ENCODE measurements at regions of chr20 and their contacts with region 1.

Region 1: GRCh38 chr20:53547664-53548239 is 45.9 kb downstream of the ZNF217 start:
- DNase-seq: peak; percentile 63
- ATAC-seq: peak; percentile 55
- H3K4me3 Mint-ChIP-seq: no peak overlapping the region
- H3K27ac Mint-ChIP-seq: no peak overlapping the region
- H3K4me1 Mint-ChIP-seq: peaks cover 2% of the 10 kb centered on the region
- H3K27me3 Mint-ChIP-seq: no peaks in the 10 kb centered on the region

Region 2: GRCh38 chr20:52312132-52312729 is 1235.5 kb before region 1 on chr20:
- CTCF ChIA-PET with region 1: interaction called, 11 read pairs
- POLR2A ChIA-PET with region 1: no interaction called
- intact Hi-C with region 1: loop called (anchors 1 kb)
- DNase-seq: peak; percentile 68
- ATAC-seq: peak; percentile 82
- H3K4me3 Mint-ChIP-seq: no peak overlapping the region
- H3K27ac Mint-ChIP-seq: no peak overlapping the region
- H3K4me1 Mint-ChIP-seq: peaks cover 20% of the 10 kb centered on the region
- H3K27me3 Mint-ChIP-seq: peaks cover 1% of the 10 kb centered on the region

Region 3: GRCh38 chr20:53413186-53413631 is 134.5 kb before region 1 on chr20:
- CTCF ChIA-PET with region 1: interaction called, 4 read pairs
- POLR2A ChIA-PET with region 1: no interaction called
- intact Hi-C with region 1: loop called (anchors 1 to 10 kb)
- DNase-seq: peak; percentile 75
- ATAC-seq: peak; percentile 71
- H3K4me3 Mint-ChIP-seq: no peak overlapping the region
- H3K27ac Mint-ChIP-seq: peak overlapping the region; percentile 38
- H3K4me1 Mint-ChIP-seq: peaks cover 6% of the 10 kb centered on the region
- H3K27me3 Mint-ChIP-seq: no peaks in the 10 kb centered on the region

Region 4: DNA sequence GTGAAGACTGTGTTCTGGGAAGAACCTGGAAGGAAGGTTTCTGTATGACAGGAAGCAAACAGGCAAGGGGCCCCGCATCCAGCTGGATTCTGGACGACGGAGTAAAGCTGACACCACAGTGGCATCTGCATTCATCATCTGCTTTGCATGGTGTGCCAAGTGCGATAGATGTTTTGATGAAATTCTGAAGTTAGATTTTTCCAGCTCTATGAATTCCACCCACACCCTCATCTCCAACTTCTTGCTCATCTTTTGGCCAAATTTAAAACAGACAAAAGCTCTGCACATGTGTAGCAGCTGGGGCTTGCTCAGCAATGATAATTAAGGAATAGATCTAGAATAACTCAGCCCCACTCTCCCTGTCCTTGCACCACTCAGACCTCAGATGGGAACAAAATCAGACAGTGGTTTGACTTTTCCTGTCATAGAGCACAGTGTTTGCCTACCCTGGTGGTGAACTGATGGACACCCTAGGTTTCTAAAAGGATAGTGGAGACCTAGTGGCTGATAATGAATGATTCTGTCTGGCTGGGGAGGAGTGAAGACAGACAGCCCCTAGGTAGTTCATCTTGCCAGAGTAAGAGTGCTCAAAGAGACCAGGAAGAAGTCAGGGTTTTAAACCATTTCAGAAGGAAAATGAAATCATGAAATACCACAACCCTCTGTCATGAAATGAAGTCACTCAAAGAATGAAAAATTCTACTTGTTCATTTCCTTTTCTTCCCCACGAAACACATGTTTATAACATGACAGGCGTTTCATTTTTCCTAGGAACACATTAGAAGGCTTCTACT is 436.8 kb after region 1 on chr20:
- CTCF ChIA-PET with region 1: no interaction called
- POLR2A ChIA-PET with region 1: interaction called, 14 read pairs
- intact Hi-C with region 1: no loop called
- DNase-seq: no peak
- ATAC-seq: peak; percentile 33
- H3K4me3 Mint-ChIP-seq: no peak overlapping the region
- H3K27ac Mint-ChIP-seq: no peak overlapping the region
- H3K4me1 Mint-ChIP-seq: peaks cover 9% of the 10 kb centered on the region
- H3K27me3 Mint-ChIP-seq: peaks cover 14% of the 10 kb centered on the region